Endothelial cell of umbilical vein (primary cell): ENCODE measurements at regions of chr3 and their contacts with region 1.

Region 1: GRCh38 chr3:11422291-11422690 is 150.1 kb downstream of the ATG7 start:
- DNase-seq: no peak
- H3K4me3 ChIP-seq: no peak overlapping the region
- H3K27ac ChIP-seq: no peak overlapping the region
- H3K4me1 ChIP-seq: no peaks in the 10 kb centered on the region
- H3K27me3 ChIP-seq: no peaks in the 10 kb centered on the region
- CTCF ChIP-seq: no peak
- POLR2A ChIP-seq: no peak

Region 2: DNA sequence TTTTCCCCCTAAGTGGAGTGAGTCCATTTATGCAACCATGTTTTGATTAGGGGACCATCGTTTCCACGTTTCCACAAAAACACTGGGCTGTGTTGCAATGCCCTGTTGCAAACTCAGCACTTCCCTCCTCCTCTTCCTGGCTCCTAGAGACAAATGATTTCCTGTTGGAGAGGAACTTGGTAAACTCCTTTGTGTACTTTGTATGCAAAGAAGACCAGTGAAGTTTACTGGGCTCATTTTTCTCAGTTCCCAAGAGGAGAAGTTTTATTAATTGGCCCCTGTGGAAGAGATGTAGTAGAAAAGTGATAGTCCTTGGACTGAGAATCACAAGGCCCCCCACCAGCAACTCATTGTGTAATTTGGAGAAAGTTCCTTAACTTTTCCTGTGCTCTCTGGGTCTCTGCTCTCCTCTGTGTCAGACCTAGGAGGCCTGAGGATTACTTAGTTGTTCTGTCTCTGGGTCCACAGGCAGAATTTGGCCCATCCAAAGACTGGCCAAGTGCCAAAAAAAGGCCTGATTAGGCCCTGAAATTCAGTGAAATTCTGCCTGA is 55.1 kb before region 1 on chr3:
- CTCF ChIA-PET with region 1: no interaction called
- POLR2A ChIA-PET with region 1: no interaction called
- dilution Hi-C with region 1: no loop called
- intact Hi-C with region 1: no loop called
- DNase-seq: peak; percentile 82
- H3K4me3 ChIP-seq: no peak overlapping the region
- H3K27ac ChIP-seq: peak overlapping the region; percentile 67
- H3K4me1 ChIP-seq: peaks cover 11% of the 10 kb centered on the region
- H3K27me3 ChIP-seq: no peaks in the 10 kb centered on the region
- CTCF ChIP-seq: no peak
- POLR2A ChIP-seq: no peak

Region 3: DNA sequence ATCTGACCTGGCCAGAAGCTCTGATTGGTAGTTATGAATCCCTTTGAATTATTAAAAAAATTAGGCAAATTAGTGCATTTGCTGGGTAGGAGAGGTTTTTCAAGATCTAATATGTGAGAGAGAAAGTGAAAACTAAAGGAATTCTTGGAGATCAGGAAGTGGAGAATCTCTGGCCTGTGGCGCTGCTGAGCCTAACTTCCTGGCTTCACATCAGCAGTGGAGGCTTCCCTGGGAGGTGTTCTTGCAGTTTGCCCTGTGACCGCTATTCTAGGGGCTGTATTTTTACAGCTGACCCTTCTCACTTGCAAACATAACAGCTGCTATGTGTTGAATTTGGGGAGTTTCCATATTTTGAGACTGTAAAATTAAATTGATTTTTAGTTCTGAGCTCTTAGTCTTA is 16.4 kb after region 1 on chr3:
- CTCF ChIA-PET with region 1: interaction called, 10 read pairs
- POLR2A ChIA-PET with region 1: no interaction called
- dilution Hi-C with region 1: no loop called
- intact Hi-C with region 1: no loop called
- DNase-seq: peak; percentile 76
- H3K4me3 ChIP-seq: no peak overlapping the region
- H3K27ac ChIP-seq: no peak overlapping the region
- H3K4me1 ChIP-seq: no peaks in the 10 kb centered on the region
- H3K27me3 ChIP-seq: no peaks in the 10 kb centered on the region
- CTCF ChIP-seq: peak in 1 of 2 donors; percentile 22
- POLR2A ChIP-seq: no peak